CD8-positive, alpha-beta T cell (primary cell): ENCODE measurements at regions of chr14 and their contacts with region 1.

Region 1: GRCh38 chr14:45253068-45253753 is at the start of gene MIS18BP1:
- DNase-seq: peak; percentile 87 to 97 (median 94)
- ATAC-seq: peak; percentile 90
- H3K4me3 ChIP-seq: peak within 1 kb of the TSS; percentile 66 to 70
- H3K4me3 Mint-ChIP-seq: peak within 1 kb of the TSS; percentile 94
- H3K27ac ChIP-seq: peak within 1 kb of the TSS; percentile 87 to 88
- H3K27ac Mint-ChIP-seq: peak within 1 kb of the TSS; percentile 96
- H3K4me1 ChIP-seq: peaks cover 20% of the 10 kb centered on the region
- H3K4me1 Mint-ChIP-seq: peaks cover 21% of the 10 kb centered on the region
- H3K27me3 ChIP-seq: no peaks in the 10 kb centered on the region
- H3K27me3 Mint-ChIP-seq: no peaks in the 10 kb centered on the region
- CTCF ChIP-seq: peak; percentile 85
- total RNA-seq, gene MIS18BP1: 19.9 to 20.9 TPM

Region 2: DNA sequence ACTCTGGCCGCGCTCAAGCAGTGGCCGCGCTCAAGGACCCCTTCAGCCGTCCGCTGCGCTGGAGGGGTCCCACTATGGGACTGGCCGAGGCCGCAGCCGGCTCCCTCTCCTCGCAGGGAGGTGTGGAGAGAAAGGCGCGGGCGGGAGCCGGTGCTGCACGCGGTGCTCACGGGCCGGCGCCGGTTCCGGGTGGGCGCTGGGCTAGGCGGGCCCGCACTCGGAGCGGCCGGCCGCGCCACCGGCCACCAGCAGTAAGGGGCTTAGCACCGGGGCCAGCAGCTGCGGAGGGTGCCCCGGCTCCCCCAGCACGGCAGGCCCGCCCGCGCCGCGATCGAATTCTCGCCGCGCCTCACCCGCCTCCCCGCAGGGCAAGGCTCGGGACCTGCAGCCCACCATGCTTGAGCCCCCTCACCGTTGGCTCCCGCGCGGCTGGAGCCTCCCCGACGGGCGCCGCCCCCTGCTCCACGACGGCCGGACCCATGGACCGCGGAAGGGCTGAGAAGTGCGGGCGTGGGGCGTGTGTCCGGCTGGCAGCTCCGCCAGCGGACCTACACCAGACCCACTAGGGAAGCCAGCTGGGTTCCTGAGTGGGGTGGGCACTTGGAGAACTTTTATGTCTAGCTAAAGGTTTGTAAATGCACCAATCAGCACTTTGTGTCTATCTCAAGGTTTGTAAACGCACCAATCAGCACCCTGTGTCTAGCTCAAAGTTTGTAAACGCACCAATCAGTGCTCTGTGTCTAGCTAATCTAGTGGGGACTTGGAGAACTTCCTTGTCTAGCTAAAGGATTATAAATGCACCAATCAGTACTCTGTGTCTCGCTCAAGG is 341.0 kb before region 1 on chr14:
- CTCF ChIA-PET with region 1: no interaction called
- POLR2A ChIA-PET with region 1: no interaction called
- intact Hi-C with region 1: loop called in 1 of 2 experiments (anchors 5 kb)
- DNase-seq: peak in 1 of 9 experiments; percentile 8
- ATAC-seq: no peak
- H3K4me3 ChIP-seq: peak overlapping the region in 1 of 2 experiments; percentile 27
- H3K4me3 Mint-ChIP-seq: peak overlapping the region; percentile 58
- H3K27ac ChIP-seq: no peak overlapping the region
- H3K27ac Mint-ChIP-seq: no peak overlapping the region
- H3K4me1 ChIP-seq: no peaks in the 10 kb centered on the region
- H3K4me1 Mint-ChIP-seq: peaks cover 10% of the 10 kb centered on the region
- H3K27me3 ChIP-seq: peaks cover 11 to 23% of the 10 kb centered on the region in 2 experiments
- H3K27me3 Mint-ChIP-seq: peaks cover 34% of the 10 kb centered on the region
- CTCF ChIP-seq: no peak

Region 3: DNA sequence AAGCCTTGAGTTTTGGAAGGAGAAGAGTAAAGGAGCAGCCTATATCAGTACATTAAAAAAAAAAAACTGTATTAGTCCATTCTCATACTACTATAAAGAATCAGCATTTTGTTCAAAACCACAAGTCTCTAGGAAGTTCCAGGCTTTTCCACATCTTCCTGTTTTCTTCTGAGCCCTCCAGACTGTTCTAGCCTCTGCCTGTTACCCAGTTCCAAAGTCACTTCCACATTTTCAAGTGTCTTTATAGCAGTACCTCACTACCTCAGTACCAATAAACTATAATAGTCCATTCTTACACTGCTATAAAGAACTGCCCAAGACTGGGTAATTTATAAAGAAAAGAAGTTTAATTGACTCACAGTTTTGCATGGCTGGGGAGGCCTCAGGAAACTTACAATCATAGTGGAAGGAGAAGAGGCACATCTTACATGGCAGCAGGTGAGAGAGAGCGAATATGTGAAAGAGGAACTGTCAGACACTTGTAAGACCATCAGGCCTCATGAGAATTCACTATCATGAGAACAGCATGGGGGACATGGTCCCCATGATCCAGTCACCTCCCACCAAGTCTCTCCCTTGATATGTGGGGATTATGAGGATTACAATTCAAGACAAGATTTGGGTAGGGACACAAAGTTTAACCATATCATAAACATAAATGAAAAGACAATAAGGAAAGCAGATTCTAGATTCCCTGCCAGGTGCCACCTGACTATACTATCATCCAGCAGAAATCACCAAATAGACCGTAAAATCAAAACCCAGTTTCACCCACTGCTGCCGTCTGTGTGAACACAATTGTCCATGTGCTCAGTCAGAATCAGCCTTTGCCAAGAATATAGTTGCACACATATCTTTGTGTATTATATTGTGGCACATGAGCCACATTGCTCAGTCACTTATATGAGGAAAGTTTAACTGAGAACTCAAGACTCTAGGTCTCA is 263.4 kb before region 1 on chr14:
- CTCF ChIA-PET with region 1: no interaction called
- POLR2A ChIA-PET with region 1: no interaction called
- intact Hi-C with region 1: no loop called
- DNase-seq: no peak
- ATAC-seq: no peak
- H3K4me3 ChIP-seq: no peak overlapping the region
- H3K4me3 Mint-ChIP-seq: no peak overlapping the region
- H3K27ac ChIP-seq: no peak overlapping the region
- H3K27ac Mint-ChIP-seq: no peak overlapping the region
- H3K4me1 ChIP-seq: no peaks in the 10 kb centered on the region
- H3K4me1 Mint-ChIP-seq: peaks cover 18% of the 10 kb centered on the region
- H3K27me3 ChIP-seq: no peaks in the 10 kb centered on the region
- H3K27me3 Mint-ChIP-seq: no peaks in the 10 kb centered on the region
- CTCF ChIP-seq: no peak

Region 4: DNA sequence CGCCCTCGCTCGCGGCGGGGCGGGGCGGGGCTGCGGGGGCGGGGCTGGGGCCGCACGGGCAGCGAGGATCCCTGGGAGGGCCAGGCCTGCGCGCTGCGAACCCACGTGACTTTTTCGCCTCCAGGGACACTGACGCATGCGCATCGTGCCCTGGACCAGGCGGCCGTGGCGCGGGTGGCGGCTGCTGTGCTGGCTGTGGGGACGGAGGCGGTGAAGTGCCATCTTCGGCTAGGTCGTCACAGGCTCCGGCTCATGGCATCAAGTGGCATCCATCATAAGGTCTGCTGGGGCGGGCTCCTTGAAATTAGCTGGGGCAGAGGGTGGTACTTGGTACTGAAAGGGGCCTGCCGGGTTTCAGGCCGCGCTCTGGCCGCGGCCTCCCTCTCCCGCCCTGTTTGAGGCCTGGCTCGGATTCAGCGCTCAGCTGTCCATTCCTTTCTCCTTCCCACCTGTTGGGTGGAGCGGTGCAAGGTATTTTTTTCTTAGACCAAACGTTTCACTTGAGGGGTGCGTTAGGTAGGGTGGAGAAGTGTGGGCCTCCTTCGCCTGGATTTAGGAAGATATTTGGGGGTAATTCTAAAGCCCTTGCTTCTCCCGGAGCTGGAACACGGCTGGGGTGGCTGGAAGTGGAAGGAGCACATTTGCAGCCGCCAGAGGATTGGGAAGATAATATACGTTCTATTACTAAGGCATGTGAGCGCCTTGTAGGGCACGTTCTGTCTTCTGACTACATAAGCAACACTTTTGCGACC is 169.1 kb before region 1 on chr14 and contains the start of gene PRPF39:
- CTCF ChIA-PET with region 1: no interaction called
- POLR2A ChIA-PET with region 1: interaction called, 7 read pairs
- intact Hi-C with region 1: loop called (anchors 1 to 5 kb)
- DNase-seq: peak; percentile 89 to 98 (median 94)
- ATAC-seq: peak; percentile 91
- H3K4me3 ChIP-seq: peak within 1 kb of the TSS; percentile 78 to 93
- H3K4me3 Mint-ChIP-seq: peak within 1 kb of the TSS; percentile 94
- H3K27ac ChIP-seq: peak within 1 kb of the TSS; percentile 82 to 84
- H3K27ac Mint-ChIP-seq: peak within 1 kb of the TSS; percentile 95
- H3K4me1 ChIP-seq: peaks cover 47% of the 10 kb centered on the region
- H3K4me1 Mint-ChIP-seq: peaks cover 55% of the 10 kb centered on the region
- H3K27me3 ChIP-seq: no peaks in the 10 kb centered on the region
- H3K27me3 Mint-ChIP-seq: no peaks in the 10 kb centered on the region
- CTCF ChIP-seq: no peak
- total RNA-seq, gene PRPF39: 64.5 to 64.7 TPM

Region 5: GRCh38 chr14:45134051-45134958 is 118.9 kb before region 1 on chr14 and contains the start of gene FKBP3:
- CTCF ChIA-PET with region 1: interaction called, 11 read pairs
- POLR2A ChIA-PET with region 1: interaction called, 15 read pairs
- intact Hi-C with region 1: loop called (anchors 1 to 2 kb)
- DNase-seq: peak; percentile 90 to 99 (median 95)
- ATAC-seq: peak; percentile 91
- H3K4me3 ChIP-seq: peak within 1 kb of the TSS; percentile 84 to 98
- H3K4me3 Mint-ChIP-seq: peak within 1 kb of the TSS; percentile 97
- H3K27ac ChIP-seq: peak within 1 kb of the TSS; percentile 84 to 92
- H3K27ac Mint-ChIP-seq: peak within 1 kb of the TSS; percentile 98
- H3K4me1 ChIP-seq: peaks cover 31% of the 10 kb centered on the region
- H3K4me1 Mint-ChIP-seq: peaks cover 48% of the 10 kb centered on the region
- H3K27me3 ChIP-seq: no peaks in the 10 kb centered on the region
- H3K27me3 Mint-ChIP-seq: no peaks in the 10 kb centered on the region
- CTCF ChIP-seq: no peak
- total RNA-seq, gene FKBP3: 32.1 to 32.3 TPM